ENCODE measurements at regions of chr15 and their contacts with region 1.

Region 1: GRCh38 chr15:40782580-40783227 is 12.9 kb downstream of the C15orf62 start:
- DNase-seq: no peak
- H3K4me3 ChIP-seq: no peak overlapping the region
- H3K27ac ChIP-seq: no peak overlapping the region
- H3K4me1 ChIP-seq: peaks cover 10% of the 10 kb centered on the region
- H3K27me3 ChIP-seq: no peaks in the 10 kb centered on the region
- CTCF ChIP-seq: peak; percentile 69

Region 2: DNA sequence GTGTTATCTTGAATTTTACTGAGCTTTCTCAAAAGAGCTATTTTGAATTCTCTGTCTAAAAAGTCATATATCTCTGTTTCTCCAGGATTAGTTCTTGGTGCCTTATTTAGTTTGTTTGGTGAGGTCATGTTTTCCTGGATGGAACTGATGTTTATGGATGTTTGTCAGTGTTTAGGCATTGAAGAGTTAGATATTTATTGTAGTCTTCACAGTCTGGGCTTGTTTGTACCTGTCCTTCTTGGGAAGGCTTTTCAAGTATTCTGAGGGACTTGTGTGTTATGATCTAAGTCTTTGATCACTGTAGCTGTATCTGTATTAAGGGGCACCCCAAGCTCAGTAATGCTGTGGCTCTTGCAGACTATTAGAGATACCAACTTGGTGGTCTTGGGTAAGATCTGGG is 98.3 kb before region 1 on chr15:
- intact Hi-C with region 1: loop called (anchors 10 kb)
- DNase-seq: no peak
- H3K4me3 ChIP-seq: no peak overlapping the region
- H3K27ac ChIP-seq: no peak overlapping the region
- H3K4me1 ChIP-seq: no peaks in the 10 kb centered on the region
- H3K27me3 ChIP-seq: no peaks in the 10 kb centered on the region
- CTCF ChIP-seq: no peak

Region 3: GRCh38 chr15:40952901-40953712 is 170.4 kb after region 1 on chr15 and contains the start of gene CHAC1:
- intact Hi-C with region 1: no loop called
- DNase-seq: peak; percentile 93
- H3K4me3 ChIP-seq: peak within 1 kb of the TSS; percentile 71
- H3K27ac ChIP-seq: peak within 1 kb of the TSS; percentile 77
- H3K4me1 ChIP-seq: peaks cover 62% of the 10 kb centered on the region
- H3K27me3 ChIP-seq: no peaks in the 10 kb centered on the region
- CTCF ChIP-seq: no peak
- total RNA-seq, gene CHAC1: 1.3 TPM

Region 4: GRCh38 chr15:41161336-41161735 is 378.6 kb after region 1 on chr15:
- intact Hi-C with region 1: no loop called
- DNase-seq: no peak
- H3K4me3 ChIP-seq: no peak overlapping the region
- H3K27ac ChIP-seq: no peak overlapping the region
- H3K4me1 ChIP-seq: no peaks in the 10 kb centered on the region
- H3K27me3 ChIP-seq: peaks cover 2% of the 10 kb centered on the region
- CTCF ChIP-seq: no peak